G401 (cell line): ENCODE measurements at regions of chr17 and their contacts with region 1.

Region 1: DNA sequence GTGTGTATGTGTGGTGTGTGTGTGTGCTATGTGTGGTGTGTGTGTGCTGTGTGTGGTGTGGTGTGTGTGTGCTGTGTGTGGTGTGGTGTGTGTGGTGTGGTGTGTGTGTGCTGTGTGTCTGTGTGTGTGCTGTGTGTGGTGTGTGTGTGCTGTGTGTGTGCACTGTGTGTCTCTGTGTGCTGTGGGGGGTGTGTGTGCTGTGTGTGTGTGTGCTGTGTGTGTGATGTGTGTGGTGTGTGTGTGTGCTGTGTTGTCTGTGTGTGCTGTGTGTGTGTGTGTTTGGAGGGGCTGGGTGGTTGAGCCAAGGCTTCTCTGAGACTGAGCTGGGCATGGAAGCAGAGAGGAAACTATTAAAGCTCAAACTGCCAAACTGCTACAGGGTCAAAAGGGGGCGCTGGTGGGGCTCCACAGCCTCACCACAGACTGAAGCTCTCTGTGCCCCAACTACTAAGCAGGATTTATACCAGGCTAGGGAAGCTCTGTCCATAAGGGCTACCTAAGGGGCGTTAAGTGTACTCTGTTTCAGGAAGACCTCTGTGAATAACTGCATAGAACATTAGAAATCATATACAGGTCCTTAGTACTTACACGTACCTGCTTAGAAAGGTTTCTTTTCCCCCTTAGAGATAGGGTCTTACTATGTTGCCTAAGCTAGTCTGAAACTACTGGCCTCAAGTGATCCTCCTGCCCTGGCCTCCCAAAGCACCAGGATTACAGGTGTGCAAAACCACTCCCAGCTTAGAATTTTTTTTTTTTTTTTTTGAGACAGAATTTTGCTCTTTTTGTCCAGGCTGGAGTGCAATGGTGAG is 27.8 kb upstream of the GHDC start:
- DNase-seq: peak; percentile 48

Region 2: DNA sequence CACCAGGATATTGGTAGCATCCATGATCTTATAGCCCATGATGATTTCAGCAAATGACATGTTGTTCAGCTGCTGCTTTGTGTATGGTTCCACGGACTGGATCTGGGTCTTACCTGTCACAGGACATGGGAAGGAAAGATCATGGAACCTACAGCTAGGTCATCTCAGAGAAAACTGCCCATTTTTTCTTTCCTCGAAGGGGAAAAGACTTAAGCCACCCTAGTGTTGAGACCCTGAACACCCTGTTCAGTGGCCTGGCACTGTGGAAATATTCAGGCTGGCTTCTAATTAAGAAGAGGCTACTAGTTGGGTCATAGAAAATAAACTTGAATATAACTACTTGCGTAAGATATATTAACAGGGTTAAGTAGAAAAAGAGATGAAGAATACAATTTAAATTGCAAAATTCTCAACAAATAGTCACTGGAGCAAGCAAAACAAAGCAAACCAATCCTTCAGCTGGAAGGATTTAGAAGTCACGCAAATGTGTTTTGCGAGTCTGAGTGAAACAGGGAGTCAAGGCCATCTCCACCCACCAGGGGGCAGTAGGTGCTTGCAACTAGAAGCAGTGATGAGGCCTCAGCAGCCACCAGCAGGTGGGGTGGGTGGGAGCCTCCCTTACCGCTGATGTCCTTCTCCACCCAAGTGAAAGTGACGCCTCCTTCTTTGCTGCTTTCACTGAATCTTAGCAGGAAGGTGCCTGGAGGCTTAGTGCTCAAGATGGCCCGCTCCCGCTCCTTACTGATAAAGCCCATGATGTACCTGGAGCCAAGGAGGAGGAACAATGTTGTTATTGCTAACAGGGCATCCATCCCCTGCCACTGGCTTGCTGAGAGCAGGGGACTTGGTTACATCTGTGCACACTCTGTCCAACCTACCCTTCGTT is 100.5 kb after region 1 on chr17:
- in situ Hi-C with region 1: loop called (anchors 25 kb)
- DNase-seq: peak; percentile 92

Region 3: GRCh38 chr17:42405963-42406495 is 183.9 kb after region 1 on chr17:
- in situ Hi-C with region 1: no loop called
- DNase-seq: peak; percentile 76